Heart right ventricle (tissue), 16 donors: ENCODE measurements at regions of chr18 and their contacts with region 1.

Region 1: GRCh38 chr18:44320619-44321460 is 359.8 kb upstream of the SETBP1 start:
- DNase-seq: no peak
- ATAC-seq: no peak
- H3K4me3 ChIP-seq: no peak overlapping the region
- H3K27ac ChIP-seq: no peak overlapping the region
- H3K4me1 ChIP-seq: no peaks in the 10 kb centered on the region
- H3K27me3 ChIP-seq: no peaks in the 10 kb centered on the region
- CTCF ChIP-seq: no peak

Region 2: DNA sequence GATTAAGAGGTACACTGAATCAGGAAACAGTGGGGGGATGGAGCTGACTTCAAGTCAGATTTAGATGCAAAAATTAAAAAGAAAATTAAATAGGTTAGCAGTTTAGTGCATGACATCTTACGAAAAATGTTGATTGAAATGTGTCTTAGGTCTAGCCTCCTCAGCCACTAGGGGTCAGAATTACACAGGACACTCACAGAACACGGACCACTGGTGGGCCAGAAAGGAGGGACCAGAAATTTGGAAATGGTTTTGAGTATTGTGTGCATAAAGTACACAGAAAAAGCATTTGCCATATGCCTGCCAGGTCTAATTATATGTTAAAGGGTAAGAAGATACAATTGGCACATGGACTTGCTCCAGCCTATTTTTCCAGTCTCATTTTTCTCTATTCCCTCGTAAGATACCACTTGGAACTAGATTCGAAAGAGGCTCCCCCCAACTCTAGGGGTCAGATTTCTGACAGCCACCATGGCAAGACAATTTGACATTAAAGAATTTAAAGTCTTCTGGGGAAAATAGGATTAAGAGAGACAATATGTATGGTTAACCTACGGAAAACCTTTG is 190.4 kb before region 1 on chr18:
- intact Hi-C with region 1: loop called in 4 of 10 experiments (anchors 5 to 10 kb)
- DNase-seq: peak in 1 of 2 donors; percentile 21
- ATAC-seq: peak in 4 of 8 donors; percentile 34 to 53 (median 48)
- H3K4me3 ChIP-seq: no peak overlapping the region
- H3K27ac ChIP-seq: no peak overlapping the region
- H3K4me1 ChIP-seq: no peaks in the 10 kb centered on the region
- H3K27me3 ChIP-seq: no peaks in the 10 kb centered on the region
- CTCF ChIP-seq: peak; percentile 40 to 77 (median 64)